Posterior cingulate gyrus (tissue), 11 donors: ENCODE measurements at regions of chr5 and their contacts with region 1.

Region 1: DNA sequence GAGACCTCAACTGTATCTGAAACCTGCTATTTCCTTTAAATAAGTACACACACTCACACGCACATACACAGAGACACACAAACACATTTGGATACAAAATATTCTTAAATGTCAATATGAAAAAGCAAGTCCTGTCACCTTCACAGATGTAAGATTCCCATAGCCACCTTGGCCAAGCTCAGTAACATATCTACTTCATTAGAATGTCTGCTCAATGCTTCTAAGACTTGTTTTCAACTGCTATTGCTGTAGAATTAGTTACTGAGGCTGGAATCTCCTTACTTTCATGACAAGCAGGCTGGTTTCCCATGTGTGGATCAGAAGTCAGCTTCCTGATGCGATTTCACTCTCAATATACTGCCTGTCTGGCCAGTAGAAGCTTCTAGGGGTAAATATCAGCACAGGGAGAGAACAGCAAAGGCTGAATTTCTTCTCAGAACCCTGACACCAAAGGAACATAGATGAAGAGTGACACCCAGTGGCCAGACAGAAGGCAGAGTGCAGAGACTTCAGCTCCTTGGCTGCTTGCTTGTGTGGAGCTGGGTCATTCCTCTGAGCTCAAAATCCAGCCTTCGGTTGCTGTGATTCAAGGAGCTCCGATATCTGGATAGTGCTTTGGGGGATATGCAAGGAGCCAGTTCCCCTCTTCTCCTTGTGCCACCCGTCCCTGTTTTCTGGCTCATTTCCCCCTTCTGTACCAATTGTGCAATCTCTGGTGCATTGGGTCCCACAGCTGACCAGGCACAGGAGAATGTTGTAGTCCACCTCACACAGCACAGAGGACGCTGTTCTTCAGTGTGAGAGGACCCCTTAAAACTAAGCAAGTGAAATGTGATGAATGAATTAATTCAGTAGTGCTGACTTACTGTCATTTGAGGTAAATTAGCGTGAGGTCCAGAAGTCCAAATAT is 26.6 kb upstream of the ABLIM3 start:
- DNase-seq: peak in 9 of 10 donors; percentile 34 to 95 (median 72)

Region 2: GRCh38 chr5:148740966-148741742 is 373.5 kb before region 1 on chr5:
- intact Hi-C with region 1: loop called (anchors 1 kb)
- DNase-seq: no peak

Region 3: DNA sequence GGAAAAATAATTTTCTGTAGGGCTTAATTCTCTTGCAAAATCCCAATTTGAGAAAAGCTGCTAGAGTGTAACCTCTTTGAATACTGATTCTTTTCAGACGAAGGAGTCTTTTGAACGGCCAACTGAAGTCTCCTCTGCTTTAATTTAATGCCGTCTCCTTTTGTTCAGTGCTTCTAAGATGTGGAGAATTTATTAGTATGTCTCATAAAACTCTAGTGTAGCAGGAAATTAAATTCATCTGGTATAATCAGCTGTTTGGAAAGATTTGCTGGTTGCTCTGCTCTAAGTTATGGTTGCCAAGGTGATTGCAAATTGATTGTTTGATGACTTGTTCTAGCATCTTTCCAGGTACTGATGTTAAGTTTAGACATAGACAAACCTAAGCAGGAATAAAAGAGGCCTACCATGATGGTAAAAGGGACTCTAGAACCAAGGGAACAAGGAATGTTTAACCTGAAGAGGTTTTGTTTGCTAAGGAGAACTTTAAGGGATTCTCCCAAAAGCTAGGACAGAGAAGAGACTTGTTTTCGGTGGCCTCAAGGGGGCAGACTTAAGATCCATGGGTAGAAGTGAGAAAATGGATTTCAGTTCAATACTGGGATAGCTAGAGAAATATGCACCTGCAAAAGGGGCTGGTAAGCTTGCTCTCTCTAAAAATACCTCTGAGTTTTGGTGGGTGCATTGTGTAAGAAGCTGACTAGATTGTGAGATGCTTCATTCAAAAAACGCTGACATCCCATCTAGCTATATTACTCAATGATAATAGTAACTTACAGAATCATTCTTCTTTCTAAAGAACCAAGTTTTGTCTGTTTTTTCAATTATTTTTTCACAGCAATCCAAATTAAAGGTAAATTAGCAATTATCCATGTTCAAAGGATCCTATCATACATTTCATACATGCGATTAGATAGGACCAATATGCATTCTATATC is 293.9 kb before region 1 on chr5:
- intact Hi-C with region 1: loop called (anchors 5 kb)
- DNase-seq: no peak

Region 4: DNA sequence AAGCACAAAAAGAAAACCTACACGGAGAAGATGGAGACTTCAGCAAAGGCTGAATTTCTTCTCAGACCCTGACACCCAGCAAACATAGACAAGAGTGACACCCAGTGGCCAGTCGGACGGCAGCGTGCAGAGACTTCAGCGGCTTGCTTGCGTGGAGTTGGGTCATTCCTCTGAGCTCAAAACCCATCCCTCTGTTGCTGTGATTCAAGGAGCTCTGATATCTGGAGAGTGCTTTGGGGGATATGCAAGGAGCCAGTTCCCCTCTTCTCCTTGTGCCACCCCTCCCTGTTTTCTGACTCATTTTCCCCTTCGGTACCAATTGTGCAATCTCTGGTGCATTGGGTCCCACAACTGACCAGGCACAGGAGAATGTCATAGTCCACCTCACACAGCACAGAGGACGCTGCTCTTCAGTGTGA is 79.3 kb before region 1 on chr5:
- intact Hi-C with region 1: loop called (anchors 10 kb)
- DNase-seq: peak; percentile 68 to 97 (median 83)